ENCODE measurements at regions of chrX and their contacts with region 1.

Region 1: DNA sequence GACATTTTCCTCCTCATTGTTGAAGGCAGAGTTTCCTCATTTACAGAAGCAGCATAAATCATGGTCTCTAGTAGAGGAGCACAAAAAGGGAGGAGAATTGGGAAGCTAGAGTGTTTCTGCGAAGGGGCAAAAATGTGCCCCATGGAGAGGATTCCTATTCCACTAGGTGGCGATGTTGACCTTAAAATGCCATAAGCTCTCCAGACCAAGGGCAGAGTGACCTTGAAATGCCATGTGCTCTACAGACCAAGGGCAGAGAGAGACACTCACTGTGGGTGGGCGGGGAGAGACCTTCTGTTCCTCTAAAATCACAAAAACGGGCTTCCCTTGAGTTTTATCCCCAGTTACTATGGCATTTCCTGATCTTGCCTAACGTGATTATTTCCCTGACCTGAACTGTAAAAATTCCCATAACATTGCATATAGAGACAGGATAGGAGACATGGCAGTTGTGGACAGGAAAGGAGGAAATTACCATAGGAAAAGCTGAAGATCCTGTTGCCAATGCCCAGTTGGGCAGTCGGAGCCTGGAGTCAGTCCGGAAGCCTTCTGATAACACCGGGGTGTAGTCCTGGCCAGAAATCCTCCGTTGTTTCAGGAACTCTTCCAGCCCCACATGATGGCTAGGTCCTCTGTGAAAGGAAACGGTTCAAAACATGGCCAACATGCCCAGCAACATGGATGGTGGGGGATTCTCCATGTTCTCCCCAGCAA is 567.7 kb downstream of the MAGEB5 start:
- DNase-seq: peak in 3 of 4 experiments; percentile 2 to 48 (median 2)
- ATAC-seq: no peak; the same call in 2 of the 3 replicates
- H3K4me3 ChIP-seq: no peak overlapping the region
- H3K27ac ChIP-seq: no peak overlapping the region
- H3K4me1 ChIP-seq: no peaks in the 10 kb centered on the region
- H3K27me3 ChIP-seq: no peaks in the 10 kb centered on the region
- CTCF ChIP-seq: peak; percentile 24 to 48 (median 43); a peak in 4 of 6 replicates
- EP300 ChIP-seq: no peak
- POLR2A ChIP-seq: no peak
- RAD21 ChIP-seq: peak in 1 of 2 experiments; percentile 52; a peak in 2 of 4 replicates

Region 2: DNA sequence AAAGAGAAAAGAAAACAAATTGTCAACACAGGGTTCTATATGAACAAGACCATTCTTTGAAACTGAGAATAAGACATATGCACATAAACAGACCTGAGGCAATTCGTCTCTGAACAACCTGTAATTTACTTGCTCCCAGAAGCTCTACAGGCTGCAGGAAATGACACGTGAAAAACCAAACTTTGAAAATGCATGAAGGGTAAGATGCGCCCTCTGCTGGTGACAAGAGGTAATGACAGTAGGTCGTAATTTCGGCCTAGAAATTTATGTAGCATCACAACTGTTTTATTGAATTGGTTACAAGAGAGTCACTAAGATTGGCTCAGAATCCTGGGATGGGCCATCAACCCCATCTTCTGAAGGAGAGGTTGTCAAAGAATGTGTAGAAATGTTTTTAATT is 403.0 kb after region 1 on chrX:
- CTCF ChIA-PET with region 1: no interaction called
- POLR2A ChIA-PET with region 1: no interaction called
- in situ Hi-C with region 1: no loop called
- intact Hi-C with region 1: loop called (anchors 2 kb)
- DNase-seq: peak; percentile 4 to 37 (median 12)
- ATAC-seq: no peak
- H3K4me3 ChIP-seq: no peak overlapping the region
- H3K27ac ChIP-seq: no peak overlapping the region
- H3K4me1 ChIP-seq: no peaks in the 10 kb centered on the region
- H3K27me3 ChIP-seq: no peaks in the 10 kb centered on the region
- CTCF ChIP-seq: peak; percentile 33 to 59 (median 55); a peak in 5 of 6 replicates
- EP300 ChIP-seq: no peak
- POLR2A ChIP-seq: no peak
- RAD21 ChIP-seq: peak; percentile 10 to 57; a peak in 2 of 4 replicates

Region 3: DNA sequence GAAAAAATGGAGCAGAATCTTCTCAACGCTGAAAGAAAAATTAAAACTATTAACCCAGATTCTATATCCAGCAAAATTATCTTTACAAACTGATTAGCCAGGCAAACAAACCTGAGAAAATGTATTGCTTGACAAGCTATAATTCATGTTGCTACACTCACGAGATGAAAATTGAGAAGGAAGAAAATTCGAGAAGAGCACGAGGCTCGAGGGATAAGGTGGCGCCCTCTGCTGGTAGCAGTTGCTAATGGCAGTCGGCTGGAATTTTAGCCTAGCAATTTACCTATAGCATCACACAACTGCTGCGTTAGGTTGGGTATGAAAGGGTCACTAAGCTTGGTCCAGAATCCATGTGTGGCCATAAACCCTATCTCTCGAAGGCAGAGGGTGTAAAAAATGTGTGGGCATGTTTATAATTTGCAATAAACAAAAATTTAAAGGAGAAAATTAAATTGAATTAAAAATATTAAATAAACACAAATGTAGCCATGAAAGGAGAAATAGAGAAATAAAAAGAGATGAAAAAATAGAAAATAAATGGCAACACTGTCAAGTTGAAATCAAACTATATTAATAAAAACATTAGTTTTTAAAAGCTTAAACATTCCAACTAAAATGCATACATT is 552.9 kb after region 1 on chrX:
- CTCF ChIA-PET with region 1: no interaction called
- POLR2A ChIA-PET with region 1: no interaction called
- in situ Hi-C with region 1: no loop called
- intact Hi-C with region 1: loop called (anchors 5 kb)
- DNase-seq: peak; percentile 14 to 41 (median 24)
- ATAC-seq: no peak
- H3K4me3 ChIP-seq: no peak overlapping the region
- H3K27ac ChIP-seq: no peak overlapping the region
- H3K4me1 ChIP-seq: no peaks in the 10 kb centered on the region
- H3K27me3 ChIP-seq: no peaks in the 10 kb centered on the region
- CTCF ChIP-seq: peak; percentile 43 to 69 (median 46)
- EP300 ChIP-seq: no peak
- POLR2A ChIP-seq: no peak
- RAD21 ChIP-seq: peak; percentile 5 to 34; a peak in 2 of 4 replicates